ENCODE measurements at regions of chr7 and their contacts with region 1.

Region 1: GRCh38 chr7:156949541-156950380 is at the start of gene NOM1:
- DNase-seq: peak; percentile 77 to 86 (median 80)
- H3K4me3 ChIP-seq: peak within 1 kb of the TSS; percentile 80 to 97 (median 81)
- H3K4me3 Mint-ChIP-seq: peak within 1 kb of the TSS; percentile 79 to 91
- H3K27ac ChIP-seq: peak within 1 kb of the TSS; percentile 27 to 84
- H3K27ac Mint-ChIP-seq: peak within 1 kb of the TSS; percentile 60 to 90 (median 74)
- H3K4me1 ChIP-seq: peaks cover 17 to 31% of the 10 kb centered on the region in 2 donors
- H3K4me1 Mint-ChIP-seq: peaks cover 22% of the 10 kb centered on the region
- H3K27me3 ChIP-seq: no peaks in the 10 kb centered on the region
- H3K27me3 Mint-ChIP-seq: peaks cover 18 to 23% (median 19%) of the 10 kb centered on the region in 3 donors
- CTCF ChIP-seq: peak; percentile 85
- polyA plus RNA-seq, gene NOM1: 0.89 to 11.5 (median 1.9) TPM

Region 2: DNA sequence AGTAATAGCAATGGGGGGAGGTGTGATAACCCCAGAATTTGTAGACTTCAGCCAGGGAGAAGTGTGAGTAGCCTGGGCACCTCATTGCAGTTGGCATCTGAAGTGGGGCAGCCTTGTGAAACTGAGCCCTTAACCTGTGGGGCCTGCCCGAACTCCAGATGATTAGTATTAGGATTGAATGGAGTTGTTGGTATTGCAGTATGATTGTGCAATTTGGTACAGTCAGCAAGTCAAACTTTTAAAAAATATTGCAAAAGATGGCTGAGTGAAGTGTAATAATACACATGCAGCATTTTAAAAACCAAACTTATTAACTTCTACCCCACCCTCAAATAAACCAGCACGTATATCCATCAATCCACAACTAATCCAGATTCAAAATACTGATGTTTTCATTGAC is 1296.0 kb before region 1 on chr7:
- intact Hi-C with region 1: loop called in 1 of 2 experiments (anchors 5 kb)
- DNase-seq: peak; percentile 32 to 77 (median 65)
- H3K4me3 ChIP-seq: no peak overlapping the region
- H3K4me3 Mint-ChIP-seq: peak overlapping the region in 1 of 2 donors; percentile 50
- H3K27ac ChIP-seq: peak overlapping the region; percentile 34 to 63
- H3K27ac Mint-ChIP-seq: peak overlapping the region; percentile 76 to 94 (median 89)
- H3K4me1 ChIP-seq: peaks cover 14 to 21% of the 10 kb centered on the region in 2 donors
- H3K4me1 Mint-ChIP-seq: peaks cover 45% of the 10 kb centered on the region
- H3K27me3 ChIP-seq: no peaks in the 10 kb centered on the region
- H3K27me3 Mint-ChIP-seq: no peaks in the 10 kb centered on the region
- CTCF ChIP-seq: no peak

Region 3: GRCh38 chr7:156892821-156893706 is 56.7 kb before region 1 on chr7 and contains the start of gene LMBR1:
- intact Hi-C with region 1: loop called (anchors 5 kb)
- DNase-seq: peak; percentile 91 to 95 (median 94)
- H3K4me3 ChIP-seq: peak within 1 kb of the TSS; percentile 58 to 85 (median 78)
- H3K4me3 Mint-ChIP-seq: peak within 1 kb of the TSS; percentile 88 to 92
- H3K27ac ChIP-seq: peak within 1 kb of the TSS; percentile 85 to 92
- H3K27ac Mint-ChIP-seq: peak within 1 kb of the TSS; percentile 88 to 95 (median 93)
- H3K4me1 ChIP-seq: peaks cover 41 to 47% of the 10 kb centered on the region in 2 donors
- H3K4me1 Mint-ChIP-seq: peaks cover 49% of the 10 kb centered on the region
- H3K27me3 ChIP-seq: no peaks in the 10 kb centered on the region
- H3K27me3 Mint-ChIP-seq: peaks cover 0 to under 1% (median 0%) of the 10 kb centered on the region in 3 donors
- CTCF ChIP-seq: peak; percentile 80
- polyA plus RNA-seq, gene LMBR1: 14.8 to 24.4 (median 21.2) TPM

Region 4: DNA sequence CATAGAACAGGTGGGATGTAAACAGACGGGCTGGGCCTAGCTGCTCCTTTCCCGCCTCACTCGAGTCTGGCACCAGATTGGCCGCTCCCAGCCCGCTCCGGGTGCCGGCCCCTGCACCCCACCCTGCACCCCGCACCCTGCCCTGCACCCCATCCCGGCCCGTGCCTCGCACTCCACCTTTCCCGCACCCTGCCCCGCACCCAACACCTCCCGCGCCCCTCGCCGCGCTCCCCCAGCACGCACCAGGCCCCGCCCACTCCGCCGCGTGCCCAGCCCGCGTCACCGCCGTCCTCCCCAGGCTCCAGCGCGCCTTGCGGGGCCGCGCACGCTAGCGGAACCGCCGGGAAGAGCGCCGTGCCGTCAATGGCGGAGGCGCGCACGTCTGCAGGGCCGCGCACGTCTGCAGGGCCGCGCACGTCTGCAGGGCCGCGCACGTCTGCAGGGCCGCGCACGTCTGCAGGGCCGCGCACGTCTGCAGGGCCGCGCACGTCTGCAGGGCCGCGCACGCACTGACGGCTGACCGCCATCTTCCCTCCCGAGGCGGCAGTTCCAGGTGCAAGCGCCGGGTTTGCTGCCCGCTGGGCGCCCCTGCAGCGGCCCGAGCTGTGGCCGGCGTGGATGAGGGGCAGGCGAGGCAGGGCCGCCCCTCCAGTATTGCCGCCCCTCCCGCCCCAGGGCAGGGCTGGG is 188.8 kb after region 1 on chr7 and contains the start of gene UBE3C:
- intact Hi-C with region 1: loop called in 1 of 2 experiments (anchors 5 kb)
- DNase-seq: peak; percentile 84 to 94 (median 91)
- H3K4me3 ChIP-seq: peak within 1 kb of the TSS; percentile 55 to 87 (median 71)
- H3K4me3 Mint-ChIP-seq: peak within 1 kb of the TSS; percentile 79 to 90
- H3K27ac ChIP-seq: peak within 1 kb of the TSS; percentile 58 to 90
- H3K27ac Mint-ChIP-seq: peak within 1 kb of the TSS; percentile 74 to 88 (median 84)
- H3K4me1 ChIP-seq: peaks cover 42 to 53% of the 10 kb centered on the region in 2 donors
- H3K4me1 Mint-ChIP-seq: peaks cover 41% of the 10 kb centered on the region
- H3K27me3 ChIP-seq: no peaks in the 10 kb centered on the region
- H3K27me3 Mint-ChIP-seq: peaks cover 0 to 2% (median 0%) of the 10 kb centered on the region in 3 donors
- CTCF ChIP-seq: no peak
- polyA plus RNA-seq, gene UBE3C: 19.5 to 34.5 (median 24.3) TPM

Region 5: DNA sequence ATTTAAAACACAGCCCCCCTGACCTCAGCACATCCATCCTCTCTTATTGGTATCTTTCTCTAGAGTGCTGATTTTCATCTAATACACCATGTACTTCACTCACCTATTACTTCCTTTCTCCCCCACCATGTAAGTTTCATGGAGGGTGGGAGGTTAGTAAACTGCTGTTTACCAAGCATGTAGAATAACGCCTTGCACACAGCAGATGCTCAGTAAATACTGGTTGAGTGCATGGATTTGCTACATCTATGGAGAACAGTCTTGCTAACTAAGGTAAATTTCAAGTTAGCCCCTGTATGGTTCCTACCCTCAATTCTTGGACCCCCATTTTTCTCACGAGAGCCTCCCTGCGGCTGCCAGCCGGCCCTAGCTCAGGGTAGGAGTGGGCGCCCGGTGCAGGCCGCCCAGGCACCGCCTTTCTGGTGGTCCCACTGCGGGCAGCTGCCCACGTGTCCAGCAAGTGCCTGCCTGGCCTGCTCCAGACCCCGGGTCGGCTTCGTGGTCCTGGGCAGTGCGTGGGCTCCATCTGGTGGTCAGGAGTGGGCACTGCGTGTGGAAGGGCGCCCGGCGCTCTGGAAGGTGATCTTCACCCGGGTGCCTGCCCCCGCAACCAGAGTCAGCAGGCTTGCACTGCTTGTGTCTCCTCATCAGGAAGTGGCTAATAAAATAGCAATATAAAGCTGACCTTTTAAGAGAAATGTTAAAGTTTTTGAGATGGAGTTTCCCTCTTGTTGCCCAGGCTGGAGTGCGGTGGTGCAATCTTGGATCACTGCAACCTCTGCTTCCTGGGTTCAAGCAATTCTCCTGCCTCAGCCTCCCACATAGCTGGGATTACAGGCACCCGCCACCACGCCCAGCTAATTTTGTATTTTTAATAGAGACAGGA is 323.7 kb after region 1 on chr7:
- intact Hi-C with region 1: loop called in 1 of 2 experiments (anchors 10 kb)
- DNase-seq: peak; percentile 53 to 72 (median 60)
- H3K4me3 ChIP-seq: no peak overlapping the region
- H3K4me3 Mint-ChIP-seq: peak overlapping the region; percentile 34 to 67
- H3K27ac ChIP-seq: no peak overlapping the region
- H3K27ac Mint-ChIP-seq: peak overlapping the region in 4 of 7 donors; percentile 41 to 91 (median 80)
- H3K4me1 ChIP-seq: peaks cover 51 to 54% of the 10 kb centered on the region in 2 donors
- H3K4me1 Mint-ChIP-seq: peaks cover 47% of the 10 kb centered on the region
- H3K27me3 ChIP-seq: no peaks in the 10 kb centered on the region
- H3K27me3 Mint-ChIP-seq: peaks cover 0 to 3% (median 2%) of the 10 kb centered on the region in 3 donors
- CTCF ChIP-seq: peak; percentile 98

Measured in CD14-positive monocyte (primary cell).